ENCODE measurements at regions of chr4 and their contacts with region 1.

Region 1: DNA sequence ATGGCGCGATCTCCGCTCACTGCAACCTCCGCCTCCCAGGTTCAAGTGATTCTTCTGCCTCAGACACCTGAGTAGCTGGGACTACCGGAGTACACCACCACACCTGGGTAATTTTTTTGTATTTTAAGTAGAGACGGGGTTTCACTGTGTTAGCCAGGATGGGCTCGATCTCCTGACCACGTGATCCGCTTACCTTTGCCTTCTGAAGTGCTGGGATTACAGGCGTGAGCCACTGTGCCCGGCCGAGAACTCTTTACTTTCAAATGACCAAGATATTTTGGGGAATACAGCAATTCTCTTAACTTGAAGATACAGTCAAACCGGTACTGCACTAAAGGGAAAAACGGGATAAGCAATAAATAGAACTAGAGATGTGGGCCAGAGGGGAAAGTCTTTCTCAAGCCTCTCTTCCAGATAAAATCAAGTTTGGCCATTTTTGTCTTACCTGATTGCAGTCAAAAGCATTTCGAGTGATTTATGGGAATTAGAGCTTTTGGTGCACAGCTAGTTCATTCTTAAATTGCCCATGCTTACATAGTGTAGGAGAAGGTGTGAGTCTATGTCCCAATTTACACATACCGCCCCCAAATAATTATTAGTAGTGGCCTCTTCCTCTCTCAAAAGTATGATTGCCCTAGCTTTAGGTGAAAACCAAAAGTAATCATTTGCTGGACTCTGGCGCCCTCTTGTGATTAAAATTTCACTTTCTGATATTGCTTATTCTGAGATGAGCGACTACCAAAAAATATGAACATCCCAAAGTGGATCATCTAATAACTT is 53.2 kb upstream of the ABCG2 start:
- DNase-seq: no peak
- ATAC-seq: peak in 1 of 2 donors; percentile 49
- H3K4me3 ChIP-seq: no peak overlapping the region
- H3K27ac ChIP-seq: no peak overlapping the region
- H3K4me1 ChIP-seq: no peaks in the 10 kb centered on the region
- H3K27me3 ChIP-seq: no peaks in the 10 kb centered on the region

Region 2: DNA sequence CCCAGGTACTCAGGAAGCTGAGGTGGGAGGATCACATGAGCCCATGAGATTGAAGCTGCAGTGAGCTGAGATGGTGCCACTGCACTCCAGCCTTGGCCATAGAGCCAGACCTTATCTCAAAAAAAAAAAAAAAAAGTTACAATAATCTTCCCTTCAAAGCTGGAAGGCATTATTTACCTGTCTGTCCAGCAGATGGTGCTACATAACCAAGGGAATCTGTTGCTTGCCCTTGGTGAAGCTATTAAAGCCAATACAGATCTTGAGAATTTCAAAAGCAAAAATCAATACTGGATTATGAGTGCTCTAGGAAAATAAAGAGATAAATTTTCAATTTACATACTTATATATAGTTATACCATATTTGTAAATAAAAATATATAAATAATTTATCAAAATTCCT is 178.4 kb before region 1 on chr4:
- intact Hi-C with region 1: loop called (anchors 5 to 10 kb)
- DNase-seq: no peak
- ATAC-seq: peak; percentile 50 to 51
- H3K4me3 ChIP-seq: no peak overlapping the region
- H3K27ac ChIP-seq: no peak overlapping the region
- H3K4me1 ChIP-seq: no peaks in the 10 kb centered on the region
- H3K27me3 ChIP-seq: no peaks in the 10 kb centered on the region

Region 3: DNA sequence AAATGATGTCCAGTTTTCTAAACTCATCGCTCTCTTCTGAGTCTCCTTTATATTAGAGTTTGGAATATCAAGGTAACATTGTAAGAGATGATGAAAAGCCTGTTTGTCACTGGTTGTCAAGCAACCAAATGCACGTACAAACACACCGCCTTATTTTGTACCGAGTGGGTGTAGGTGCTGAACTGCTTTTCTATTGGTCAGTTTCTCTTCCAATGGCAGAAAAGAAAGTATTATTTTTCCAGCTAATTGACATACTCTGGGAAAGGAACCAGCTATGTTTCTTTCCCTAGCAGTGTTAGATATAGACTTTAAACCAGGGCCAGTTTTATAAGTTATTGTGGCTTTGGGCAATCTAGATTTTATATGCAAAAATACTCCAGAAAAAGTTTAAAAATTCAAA is 79.3 kb after region 1 on chr4:
- intact Hi-C with region 1: no loop called
- DNase-seq: no peak
- ATAC-seq: peak; percentile 86
- H3K4me3 ChIP-seq: no peak overlapping the region
- H3K27ac ChIP-seq: no peak overlapping the region
- H3K4me1 ChIP-seq: peaks cover 2% of the 10 kb centered on the region
- H3K27me3 ChIP-seq: no peaks in the 10 kb centered on the region

Region 4: DNA sequence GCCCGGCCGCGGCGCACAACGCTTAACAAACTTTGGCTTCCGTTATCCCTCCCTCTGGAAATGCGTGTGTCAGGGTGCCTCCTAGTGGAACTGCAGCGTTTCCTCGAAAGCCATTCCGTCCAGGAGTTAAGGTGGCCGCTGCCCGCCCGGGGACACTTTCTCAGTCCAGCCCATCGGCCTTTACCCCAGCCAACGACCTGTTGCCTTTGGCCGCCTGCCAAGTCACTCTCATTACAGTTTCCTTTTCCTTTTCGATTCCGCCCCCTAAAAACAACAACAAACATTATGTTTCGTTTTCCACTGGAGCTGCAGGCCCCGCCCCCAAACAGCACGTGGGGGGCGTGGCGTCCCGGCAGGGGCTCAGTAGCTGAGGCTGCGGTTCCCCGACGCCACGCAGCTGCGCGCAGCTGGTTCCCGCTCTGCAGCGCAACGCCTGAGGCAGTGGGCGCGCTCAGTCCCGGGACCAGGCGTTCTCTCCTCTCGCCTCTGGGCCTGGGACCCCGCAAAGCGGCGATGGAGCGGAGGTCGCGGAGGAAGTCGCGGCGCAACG is 245.2 kb after region 1 on chr4 and contains the start of gene HERC5:
- intact Hi-C with region 1: loop called in 1 of 4 experiments (anchors 10 kb)
- DNase-seq: peak; percentile 95 to 97 (median 96)
- ATAC-seq: peak; percentile 96
- H3K4me3 ChIP-seq: peak within 1 kb of the TSS; percentile 49
- H3K27ac ChIP-seq: peak within 1 kb of the TSS; percentile 26
- H3K4me1 ChIP-seq: no peaks in the 10 kb centered on the region
- H3K27me3 ChIP-seq: no peaks in the 10 kb centered on the region
- total RNA-seq, gene HERC5: 3.2 to 4.6 (median 3.8) TPM